Left cardiac atrium (tissue), 4 donors: ENCODE measurements at regions of chr16 and their contacts with region 1.

Region 1: GRCh38 chr16:30166202-30166902 is 17.1 kb upstream of the CORO1A start:
- DNase-seq: no peak
- ATAC-seq: peak in 1 of 2 donors; percentile 66

Region 2: GRCh38 chr16:30104494-30104968 is 61.8 kb before region 1 on chr16:
- intact Hi-C with region 1: no loop called
- DNase-seq: no peak
- ATAC-seq: no peak

Region 3: GRCh38 chr16:30131869-30132475 is 34.4 kb before region 1 on chr16:
- intact Hi-C with region 1: loop called in 1 of 2 experiments (anchors 5 kb)
- DNase-seq: no peak
- ATAC-seq: no peak

Region 4: GRCh38 chr16:30609926-30610839 is 443.8 kb after region 1 on chr16 and contains the start of gene ZNF689:
- intact Hi-C with region 1: no loop called
- DNase-seq: peak; percentile 93
- ATAC-seq: peak; percentile 99
- total RNA-seq, gene ZNF689: 5.2 to 6.6 TPM